Cardiac septum (tissue), 1 donor: ENCODE measurements at regions of chr17 and their contacts with region 1.

Region 1: DNA sequence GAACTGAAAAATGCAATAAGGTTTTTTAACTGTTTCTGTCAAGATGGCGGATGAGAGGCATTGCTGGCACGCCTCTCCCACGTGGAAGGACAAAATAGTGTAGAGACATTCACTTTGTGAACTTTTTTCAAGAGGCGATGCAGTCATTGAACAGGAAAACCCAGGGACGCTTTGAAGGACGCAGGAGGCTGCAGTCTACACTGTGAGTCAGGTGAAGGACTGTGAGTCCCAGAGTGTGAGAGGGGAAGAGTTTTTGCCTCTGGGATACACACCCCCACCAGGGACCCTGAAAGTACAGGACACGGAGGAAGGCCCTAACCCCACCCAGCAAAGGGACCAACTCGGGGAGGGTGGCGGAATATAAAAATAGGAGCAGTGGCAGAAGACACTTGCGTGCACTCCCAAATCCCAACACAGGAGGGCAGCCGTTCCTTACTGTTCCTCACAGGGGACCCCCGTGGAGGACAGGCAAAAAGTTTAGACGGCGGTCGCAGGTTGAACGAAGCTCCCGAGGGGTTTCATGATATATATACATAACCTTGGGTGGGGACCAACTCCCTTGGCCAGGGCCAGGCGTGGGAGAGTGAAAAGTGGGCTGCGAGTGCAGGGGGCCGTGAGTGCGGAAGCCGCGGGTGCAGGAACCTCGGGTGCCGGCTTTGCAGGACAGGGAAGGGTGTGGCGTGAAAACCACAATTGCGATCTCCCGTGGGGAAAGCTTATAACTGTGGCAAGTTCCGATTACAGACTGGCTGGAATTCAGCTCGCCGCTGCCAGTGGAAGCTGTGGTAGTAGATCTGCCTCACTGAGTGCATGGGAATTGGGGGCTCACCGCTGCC is 82.0 kb upstream of the ALOX12 start:
- DNase-seq: peak; percentile 81

Region 2: DNA sequence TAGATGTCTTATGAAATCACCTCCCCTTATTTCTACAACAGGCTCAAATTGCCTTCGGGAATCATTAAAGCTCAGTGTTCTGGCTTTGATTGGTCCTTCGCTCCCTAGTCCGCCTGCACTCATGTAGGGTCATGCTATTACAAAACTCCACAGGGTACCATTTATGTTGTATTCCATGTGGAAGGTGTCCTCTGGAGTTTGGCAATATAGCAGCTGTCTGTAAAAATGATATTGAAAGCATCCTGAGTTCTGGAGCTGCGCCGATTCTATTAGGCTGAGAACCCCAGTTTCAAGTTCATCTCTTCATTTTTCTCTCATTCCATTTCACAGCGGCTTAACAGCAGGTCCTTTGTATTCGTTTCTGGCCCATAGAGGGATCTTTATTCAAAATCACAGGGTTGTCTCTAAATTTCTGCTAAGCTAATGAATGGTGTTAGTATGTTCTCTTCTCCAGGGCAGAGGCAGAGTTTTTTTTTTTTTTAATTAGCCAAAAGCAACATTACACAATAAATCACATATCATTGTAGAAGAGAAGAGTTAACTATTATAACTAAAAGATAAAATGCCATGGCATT is 10.4 kb before region 1 on chr17:
- intact Hi-C with region 1: no loop called
- DNase-seq: no peak

Region 3: GRCh38 chr17:7004398-7005253 is 90.8 kb after region 1 on chr17:
- intact Hi-C with region 1: loop called (anchors 2 kb)
- DNase-seq: no peak

Region 4: GRCh38 chr17:7136266-7136877 is 222.5 kb after region 1 on chr17:
- intact Hi-C with region 1: loop called (anchors 10 kb)
- DNase-seq: peak; percentile 81